Activated CD4-positive, alpha-beta memory T cell treated with anti-CD3 and anti-CD28 coated beads, Interleukin-2, amount 10 ng/mL, durations not matched to agents 7 days and 5 days (primary cell): ENCODE measurements at regions of chr4 and their contacts with region 1.

Region 1: GRCh38 chr4:48779998-48780742 is at the start of gene FRYL:
- DNase-seq: peak; percentile 99
- H3K4me3 Mint-ChIP-seq: peak within 1 kb of the TSS; percentile 93
- H3K27ac Mint-ChIP-seq: peak within 1 kb of the TSS; percentile 88
- H3K4me1 Mint-ChIP-seq: peaks cover 43% of the 10 kb centered on the region
- H3K27me3 Mint-ChIP-seq: no peaks in the 10 kb centered on the region
- total RNA-seq, gene FRYL: 82.4 to 82.7 TPM

Region 2: DNA sequence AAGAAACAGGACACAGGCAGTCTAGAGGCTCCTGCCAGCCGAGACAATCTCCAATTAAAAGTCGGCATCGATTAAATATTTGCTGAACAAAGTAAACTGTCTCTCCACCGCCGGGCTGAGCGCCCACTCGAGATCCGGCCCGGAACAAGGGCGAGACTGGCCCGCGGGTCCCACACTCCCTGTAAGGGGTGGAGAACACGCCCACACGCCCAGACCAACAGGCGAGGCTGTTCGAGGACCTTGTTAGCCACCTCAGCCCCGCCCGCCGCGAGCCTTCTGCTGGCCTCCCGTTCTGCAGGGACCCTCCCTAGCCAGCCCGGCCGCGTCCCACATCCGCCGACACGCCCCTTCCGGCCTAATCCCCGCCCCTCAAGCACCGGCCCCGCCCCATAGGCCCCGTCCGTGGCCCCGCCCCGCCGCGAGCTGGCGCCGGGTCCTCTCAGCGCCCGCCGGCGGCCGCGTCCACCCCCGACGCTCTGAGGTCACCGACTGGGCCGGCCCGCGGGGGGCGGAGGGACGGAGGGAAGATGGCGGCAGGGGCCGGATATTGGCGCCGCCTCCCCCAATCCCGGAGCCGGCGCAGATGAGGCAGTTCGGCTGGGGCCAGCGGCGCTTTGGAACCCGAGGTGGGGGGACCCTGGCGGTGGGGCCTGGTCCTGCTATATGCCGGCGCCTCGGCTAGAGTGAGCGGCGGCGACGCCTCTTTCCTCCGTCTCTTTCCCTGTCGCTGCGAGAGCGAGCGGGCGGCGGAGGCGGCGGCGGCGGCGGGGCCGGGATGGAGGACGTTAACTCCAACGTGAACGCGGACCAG is 439.0 kb before region 1 on chr4 and contains the start of gene SLAIN2:
- CTCF ChIA-PET with region 1: no interaction called
- POLR2A ChIA-PET with region 1: interaction called, 13 read pairs
- DNase-seq: peak; percentile 98
- H3K4me3 Mint-ChIP-seq: peak within 1 kb of the TSS; percentile 97
- H3K27ac Mint-ChIP-seq: peak within 1 kb of the TSS; percentile 93
- H3K4me1 Mint-ChIP-seq: peaks cover 57% of the 10 kb centered on the region
- H3K27me3 Mint-ChIP-seq: no peaks in the 10 kb centered on the region
- total RNA-seq, gene SLAIN2: 62.4 to 66.2 TPM

Region 3: GRCh38 chr4:48578132-48578968 is 201.8 kb before region 1 on chr4:
- CTCF ChIA-PET with region 1: interaction called, 25 read pairs
- POLR2A ChIA-PET with region 1: interaction called, 9 read pairs
- DNase-seq: peak; percentile 41
- H3K4me3 Mint-ChIP-seq: no peak overlapping the region
- H3K27ac Mint-ChIP-seq: no peak overlapping the region
- H3K4me1 Mint-ChIP-seq: no peaks in the 10 kb centered on the region
- H3K27me3 Mint-ChIP-seq: no peaks in the 10 kb centered on the region

Region 4: DNA sequence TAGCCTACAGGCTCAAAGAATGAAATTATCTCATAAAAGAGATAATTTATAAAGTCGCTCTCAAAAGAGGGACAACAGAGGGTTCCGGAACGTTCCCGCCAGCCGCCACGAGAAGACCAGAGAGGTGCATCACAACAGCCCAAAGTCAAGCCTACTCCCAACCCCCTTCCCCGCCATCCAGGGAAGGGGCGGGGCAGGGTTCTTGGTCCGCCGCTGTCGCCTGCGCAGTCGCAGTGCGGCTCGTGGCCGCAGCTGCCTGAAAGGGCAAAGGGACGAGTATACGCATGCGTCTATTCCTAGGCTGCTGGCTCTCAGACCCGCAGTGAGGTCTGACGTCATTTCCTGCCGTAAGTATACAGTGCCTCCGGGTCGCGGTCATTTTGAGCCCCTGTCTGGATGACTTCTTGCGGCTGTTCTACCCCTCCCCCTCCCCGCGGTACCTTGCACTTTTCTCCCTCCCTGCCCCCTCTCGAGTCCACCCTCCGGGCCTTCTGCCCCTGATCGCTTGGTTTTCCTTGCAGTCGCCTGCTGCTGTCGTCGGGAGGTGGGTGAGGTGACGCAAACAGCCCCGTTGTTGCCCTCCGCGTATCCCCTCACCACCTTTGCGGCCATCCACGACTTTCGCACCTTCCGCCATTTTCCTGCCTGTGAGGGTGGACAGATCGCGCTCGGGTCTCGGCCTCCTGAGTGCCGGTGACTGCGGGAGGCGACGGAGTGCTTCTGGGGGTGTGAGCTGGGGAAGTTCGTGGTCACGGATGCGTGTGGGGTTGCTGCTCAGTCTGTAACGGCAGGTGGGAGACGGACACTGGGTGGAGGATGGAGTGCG is 50.7 kb after region 1 on chr4 and contains the start of gene OCIAD1:
- CTCF ChIA-PET with region 1: no interaction called
- POLR2A ChIA-PET with region 1: interaction called, 35 read pairs
- DNase-seq: peak; percentile 95
- H3K4me3 Mint-ChIP-seq: peak within 1 kb of the TSS; percentile 100
- H3K27ac Mint-ChIP-seq: peak within 1 kb of the TSS; percentile 99
- H3K4me1 Mint-ChIP-seq: peaks cover 25% of the 10 kb centered on the region
- H3K27me3 Mint-ChIP-seq: peaks cover 2% of the 10 kb centered on the region
- total RNA-seq, gene OCIAD1: 103 to 104 TPM

Region 5: DNA sequence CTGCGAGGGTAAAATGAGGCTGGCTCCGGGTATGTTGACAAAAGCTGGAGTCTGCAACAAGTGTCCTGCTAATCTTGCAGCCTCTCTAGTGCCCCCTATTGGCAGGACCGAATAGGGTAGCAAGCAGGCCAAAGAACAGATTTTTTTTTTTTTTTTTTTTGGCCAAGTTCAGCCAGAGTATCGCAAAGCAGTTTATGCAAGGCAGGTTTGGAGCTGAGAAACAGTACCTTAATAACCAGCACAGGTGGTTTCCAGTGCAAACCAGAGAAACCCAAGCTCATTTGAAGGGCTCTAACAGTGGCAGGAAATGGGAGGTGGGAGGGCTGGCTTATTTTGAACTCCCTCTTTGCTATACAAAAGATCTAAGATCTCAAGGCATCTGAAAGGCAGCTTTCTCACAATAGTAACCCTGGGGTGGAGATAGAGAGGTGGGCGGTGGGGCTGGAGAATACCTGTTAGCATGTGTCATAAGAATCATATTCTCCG is 164.6 kb after region 1 on chr4:
- CTCF ChIA-PET with region 1: interaction called, 11 read pairs
- POLR2A ChIA-PET with region 1: interaction called, 3 read pairs
- DNase-seq: peak; percentile 63
- H3K4me3 Mint-ChIP-seq: no peak overlapping the region
- H3K27ac Mint-ChIP-seq: no peak overlapping the region
- H3K4me1 Mint-ChIP-seq: peaks cover 7% of the 10 kb centered on the region
- H3K27me3 Mint-ChIP-seq: peaks cover 11% of the 10 kb centered on the region